Activated CD4-positive, alpha-beta T cell treated with anti-CD3 and anti-CD28 coated beads, Interleukin-2, amount 10 ng/mL, durations not matched to agents 24 days and 14 days (primary cell): ENCODE measurements at regions of chr20 and their contacts with region 1.

Region 1: DNA sequence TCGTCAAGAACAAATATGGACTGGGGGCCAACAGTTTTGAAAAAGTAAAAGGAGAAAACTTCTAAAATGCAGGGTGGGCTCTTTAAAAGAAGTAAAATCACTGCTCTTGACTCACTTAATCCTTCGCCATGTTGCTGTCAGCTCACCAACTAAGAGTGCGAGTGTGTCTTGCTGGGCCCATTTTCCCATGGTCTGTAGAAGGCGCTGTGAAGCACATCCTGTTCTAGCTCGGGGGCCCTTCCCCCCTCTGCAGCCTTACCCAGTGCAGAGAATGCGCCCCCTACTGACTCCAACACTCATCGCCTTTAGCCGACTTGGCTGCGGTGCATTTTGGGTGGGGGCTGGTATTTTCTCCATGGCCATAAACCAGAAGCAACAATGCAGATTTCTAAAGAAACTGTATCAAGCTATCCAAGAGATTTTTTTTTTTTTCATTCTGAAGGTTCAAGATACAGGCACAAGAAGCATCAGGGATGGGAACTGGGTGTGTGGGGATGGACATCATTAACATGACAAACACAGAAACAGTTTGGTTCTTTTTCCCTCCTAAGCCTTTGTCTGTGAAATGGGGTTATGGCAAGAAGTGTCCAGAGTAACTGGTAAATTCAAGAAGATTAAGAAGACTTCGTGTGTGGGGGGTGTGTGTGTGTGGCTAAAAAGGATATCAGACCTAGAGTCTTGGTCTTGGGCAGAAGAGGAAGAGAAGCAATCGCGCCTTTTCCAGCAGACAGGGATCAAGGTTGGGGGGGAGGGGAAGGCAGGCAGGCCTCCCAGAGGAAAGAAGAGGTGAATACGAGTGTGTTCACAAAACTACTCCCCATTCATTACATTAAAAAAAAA is 1.7 kb downstream of the ADNP start:
- DNase-seq: peak; percentile 97
- H3K4me3 Mint-ChIP-seq: peak overlapping the region; percentile 94
- H3K27ac Mint-ChIP-seq: peak overlapping the region; percentile 98
- H3K4me1 Mint-ChIP-seq: peaks cover 46% of the 10 kb centered on the region
- H3K27me3 Mint-ChIP-seq: no peaks in the 10 kb centered on the region

Region 2: GRCh38 chr20:50790651-50791277 is 138.8 kb before region 1 on chr20:
- intact Hi-C with region 1: loop called (anchors 1 kb)
- DNase-seq: peak; percentile 93
- H3K4me3 Mint-ChIP-seq: no peak overlapping the region
- H3K27ac Mint-ChIP-seq: peak overlapping the region; percentile 69
- H3K4me1 Mint-ChIP-seq: peaks cover 11% of the 10 kb centered on the region
- H3K27me3 Mint-ChIP-seq: peaks cover 4% of the 10 kb centered on the region

Region 3: GRCh38 chr20:50817776-50818172 is 111.7 kb before region 1 on chr20:
- intact Hi-C with region 1: loop called (anchors 1 kb)
- DNase-seq: no peak
- H3K4me3 Mint-ChIP-seq: no peak overlapping the region
- H3K27ac Mint-ChIP-seq: peak overlapping the region; percentile 96
- H3K4me1 Mint-ChIP-seq: peaks cover 30% of the 10 kb centered on the region
- H3K27me3 Mint-ChIP-seq: no peaks in the 10 kb centered on the region

Region 4: DNA sequence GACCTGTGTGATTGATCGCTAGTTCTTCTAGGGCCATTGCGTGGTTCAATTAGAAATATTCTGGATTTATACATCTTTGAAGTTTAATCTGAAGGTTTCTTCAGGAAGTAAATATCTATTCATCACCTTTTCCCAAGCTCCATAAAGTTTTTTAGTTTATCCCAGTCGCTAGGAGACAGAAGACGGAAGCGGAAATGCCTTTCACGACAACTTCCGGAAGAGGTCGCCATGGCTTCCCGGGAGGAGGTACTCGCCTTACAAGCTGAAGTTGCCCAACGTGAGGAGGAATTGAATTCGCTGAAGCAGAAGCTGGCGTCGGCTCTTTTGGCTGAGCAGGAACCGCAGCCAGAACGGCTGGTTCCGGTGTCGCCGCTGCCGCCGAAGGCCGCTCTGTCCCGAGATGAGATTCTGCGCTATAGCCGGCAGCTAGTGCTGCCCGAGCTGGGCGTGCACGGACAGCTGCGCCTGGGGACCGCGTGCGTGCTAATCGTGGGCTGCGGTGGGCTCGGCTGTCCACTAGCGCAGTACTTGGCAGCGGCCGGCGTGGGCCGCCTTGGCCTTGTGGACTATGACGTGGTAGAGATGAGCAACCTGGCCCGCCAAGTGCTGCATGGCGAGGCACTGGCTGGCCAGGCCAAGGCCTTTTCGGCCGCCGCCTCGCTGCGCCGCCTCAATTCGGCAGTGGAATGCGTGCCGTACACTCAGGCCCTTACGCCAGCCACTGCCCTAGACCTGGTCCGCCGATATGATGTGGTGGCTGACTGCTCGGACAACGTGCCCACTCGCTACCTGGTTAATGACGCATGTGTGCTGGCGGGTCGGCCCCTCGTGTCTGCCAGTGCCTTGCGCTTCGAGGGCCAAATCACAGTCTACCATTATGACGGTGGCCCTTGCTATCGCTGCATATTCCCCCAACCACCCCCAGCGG is 29.4 kb after region 1 on chr20 and contains the start of gene MOCS3:
- intact Hi-C with region 1: loop called (anchors 1 kb)
- DNase-seq: peak; percentile 95
- H3K4me3 Mint-ChIP-seq: peak within 1 kb of the TSS; percentile 99
- H3K27ac Mint-ChIP-seq: peak within 1 kb of the TSS; percentile 96
- H3K4me1 Mint-ChIP-seq: peaks cover 28% of the 10 kb centered on the region
- H3K27me3 Mint-ChIP-seq: no peaks in the 10 kb centered on the region
- total RNA-seq, gene MOCS3: 5.7 and 6.3 TPM in 2 replicates

Region 5: DNA sequence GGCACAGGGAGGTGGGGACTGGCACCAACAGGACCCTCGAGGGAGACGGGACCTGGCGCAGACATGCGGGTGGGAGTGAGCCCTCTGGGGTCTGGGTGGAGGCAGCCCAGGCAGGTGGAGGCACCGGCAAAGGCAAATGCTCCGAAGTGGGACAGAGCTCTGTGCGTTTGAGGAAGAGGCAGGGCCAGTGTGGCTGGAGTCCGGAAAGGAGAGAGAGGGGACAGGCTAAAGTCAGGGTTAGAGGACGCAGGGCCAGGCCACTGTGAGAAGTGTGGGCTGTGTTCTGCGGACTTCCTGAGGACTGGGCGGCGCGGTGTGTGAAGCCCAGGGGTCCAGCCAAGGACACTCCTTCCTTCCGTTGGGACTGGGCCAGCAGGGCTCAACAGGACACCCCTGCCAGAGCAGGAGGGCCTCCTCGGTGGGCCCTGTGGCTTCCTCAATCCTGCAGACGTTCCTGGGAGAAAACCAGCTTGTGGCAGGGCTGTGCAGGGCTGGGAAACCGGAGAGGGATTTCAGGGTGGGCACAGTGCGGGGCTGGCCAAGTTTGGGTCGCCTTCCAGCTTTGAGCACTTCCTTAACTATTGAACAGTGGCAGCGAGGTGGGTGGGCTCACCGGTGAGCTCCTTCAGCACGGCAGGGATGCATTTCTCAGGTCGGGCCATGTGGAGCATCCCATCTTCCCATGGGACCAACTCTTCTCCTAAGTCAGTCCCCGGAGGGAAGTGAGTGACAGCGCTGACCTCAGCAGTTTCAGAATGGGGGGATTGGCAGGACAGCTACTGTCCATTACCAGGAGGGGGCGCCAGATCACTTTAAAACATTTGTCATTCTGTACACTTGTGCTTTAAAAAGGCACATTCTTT is 51.6 kb after region 1 on chr20:
- intact Hi-C with region 1: loop called (anchors 1 kb)
- DNase-seq: peak; percentile 87
- H3K4me3 Mint-ChIP-seq: peak overlapping the region; percentile 40
- H3K27ac Mint-ChIP-seq: peak overlapping the region; percentile 88
- H3K4me1 Mint-ChIP-seq: peaks cover 14% of the 10 kb centered on the region
- H3K27me3 Mint-ChIP-seq: peaks cover 15% of the 10 kb centered on the region

Region 6: DNA sequence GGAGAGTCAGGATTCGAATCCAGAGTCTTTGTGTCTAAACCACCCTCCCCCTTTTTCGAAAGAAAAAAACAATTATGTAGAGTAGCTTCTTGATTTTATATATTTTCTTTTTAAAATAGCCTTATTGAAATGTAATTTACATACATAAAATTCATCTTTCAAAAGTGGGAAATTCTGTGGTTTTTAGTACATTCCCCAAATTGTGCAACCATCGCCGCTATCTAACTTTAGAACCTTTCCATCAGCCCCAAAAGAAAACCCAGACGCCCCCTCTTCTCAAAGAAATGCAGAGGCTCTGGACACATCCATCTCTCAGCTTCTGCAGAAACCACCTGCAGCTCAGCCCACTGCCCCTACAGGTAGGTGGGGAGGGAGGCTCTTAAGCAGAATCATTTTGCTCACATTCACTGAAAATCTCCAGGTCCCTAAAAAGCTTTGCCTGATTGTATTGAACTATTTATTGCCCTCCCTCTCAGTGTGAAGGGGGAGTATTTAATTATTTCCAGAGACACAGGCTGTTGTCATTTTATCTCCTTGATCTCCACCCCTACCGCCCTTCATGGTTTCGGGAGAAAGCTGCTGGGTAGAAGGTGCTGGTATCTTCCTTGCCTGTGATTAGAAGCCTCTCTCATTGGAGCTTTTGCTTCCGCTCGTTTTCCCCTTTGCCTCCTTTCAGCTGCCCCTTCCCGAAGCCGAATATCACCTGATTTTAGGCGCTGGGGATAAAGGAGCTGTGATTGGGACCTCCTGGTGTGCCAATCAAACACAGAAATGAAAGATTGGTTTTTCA is 162.1 kb after region 1 on chr20:
- intact Hi-C with region 1: no loop called
- DNase-seq: no peak
- H3K4me3 Mint-ChIP-seq: peak overlapping the region; percentile 36
- H3K27ac Mint-ChIP-seq: no peak overlapping the region
- H3K4me1 Mint-ChIP-seq: peaks cover 9% of the 10 kb centered on the region
- H3K27me3 Mint-ChIP-seq: peaks cover 44% of the 10 kb centered on the region